ENCODE measurements at regions of chr5 and their contacts with region 1.

Region 1: DNA sequence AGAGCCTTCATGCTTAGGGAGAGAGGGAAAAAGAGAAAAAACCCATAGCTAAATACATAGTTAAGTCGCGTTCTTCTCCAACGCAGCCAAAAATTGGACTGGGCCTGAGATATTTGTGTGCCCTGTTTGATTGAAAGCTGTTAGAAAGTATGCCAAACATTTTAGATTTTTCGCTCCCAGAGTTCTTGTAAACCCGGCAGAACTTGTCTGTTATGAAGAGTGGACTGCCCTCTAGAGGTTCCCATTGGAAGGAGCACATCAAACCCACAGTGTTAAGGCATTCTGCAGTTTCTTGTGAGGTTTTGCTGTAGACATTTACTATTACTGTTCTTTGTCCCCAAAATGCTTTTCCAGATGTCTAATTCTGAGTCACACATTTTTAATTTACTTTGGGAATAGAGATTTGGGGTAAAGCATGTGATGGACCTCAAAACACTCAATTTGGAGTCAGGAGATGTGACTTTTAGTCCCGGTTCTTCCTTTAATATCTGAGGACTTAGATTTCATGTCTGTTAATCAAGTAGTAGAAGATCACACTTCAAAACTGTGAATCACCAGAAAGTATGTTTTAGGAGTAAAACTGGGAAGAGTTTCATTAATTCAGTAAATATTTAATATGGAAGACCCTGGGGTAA is 96.6 kb downstream of the PCSK1 start:
- DNase-seq: peak; percentile 79
- ATAC-seq: peak; percentile 93
- H3K4me3 Mint-ChIP-seq: no peak overlapping the region
- H3K27ac Mint-ChIP-seq: no peak overlapping the region
- H3K4me1 Mint-ChIP-seq: no peaks in the 10 kb centered on the region
- H3K27me3 Mint-ChIP-seq: peaks cover 25% of the 10 kb centered on the region
- CTCF ChIP-seq: peak; percentile 80

Region 2: DNA sequence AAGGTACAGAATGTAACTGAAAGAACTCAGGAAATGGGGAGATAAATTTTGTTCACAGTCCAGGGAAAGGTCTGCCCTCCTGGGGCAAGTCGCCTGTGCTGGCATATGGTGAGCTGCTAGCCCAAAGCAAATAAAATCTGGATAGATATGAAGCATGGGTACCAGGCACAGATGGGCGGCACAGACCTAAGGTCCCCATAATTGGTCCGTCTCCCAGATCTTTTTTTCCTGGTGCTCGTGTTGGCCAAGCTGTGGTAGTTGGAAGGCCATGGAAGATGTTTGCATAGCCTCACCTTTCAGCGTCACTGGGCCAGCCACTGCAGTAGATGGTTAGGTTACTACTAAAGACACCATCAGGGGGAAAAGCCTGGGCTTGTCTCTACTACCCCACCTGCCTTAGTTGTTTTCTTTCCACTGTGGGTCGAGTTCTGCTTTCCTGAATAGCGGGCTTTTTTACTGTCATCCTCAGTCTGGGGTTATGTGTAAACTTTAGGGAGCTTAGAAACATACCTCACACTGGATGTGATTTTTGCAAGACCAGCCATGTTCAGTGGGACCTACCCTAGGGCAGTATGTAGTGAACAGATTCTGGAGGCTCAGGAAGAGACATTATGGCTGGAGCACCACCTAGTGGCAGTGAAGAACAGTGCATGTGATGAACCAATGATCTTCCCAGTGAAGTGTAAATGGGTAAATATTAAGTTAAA is 489.8 kb before region 1 on chr5:
- CTCF ChIA-PET with region 1: interaction called, 20 read pairs
- POLR2A ChIA-PET with region 1: no interaction called
- intact Hi-C with region 1: no loop called
- DNase-seq: peak; percentile 77
- ATAC-seq: peak; percentile 78
- H3K4me3 Mint-ChIP-seq: no peak overlapping the region
- H3K27ac Mint-ChIP-seq: no peak overlapping the region
- H3K4me1 Mint-ChIP-seq: peaks cover 17% of the 10 kb centered on the region
- H3K27me3 Mint-ChIP-seq: no peaks in the 10 kb centered on the region
- CTCF ChIP-seq: peak; percentile 93

Region 3: DNA sequence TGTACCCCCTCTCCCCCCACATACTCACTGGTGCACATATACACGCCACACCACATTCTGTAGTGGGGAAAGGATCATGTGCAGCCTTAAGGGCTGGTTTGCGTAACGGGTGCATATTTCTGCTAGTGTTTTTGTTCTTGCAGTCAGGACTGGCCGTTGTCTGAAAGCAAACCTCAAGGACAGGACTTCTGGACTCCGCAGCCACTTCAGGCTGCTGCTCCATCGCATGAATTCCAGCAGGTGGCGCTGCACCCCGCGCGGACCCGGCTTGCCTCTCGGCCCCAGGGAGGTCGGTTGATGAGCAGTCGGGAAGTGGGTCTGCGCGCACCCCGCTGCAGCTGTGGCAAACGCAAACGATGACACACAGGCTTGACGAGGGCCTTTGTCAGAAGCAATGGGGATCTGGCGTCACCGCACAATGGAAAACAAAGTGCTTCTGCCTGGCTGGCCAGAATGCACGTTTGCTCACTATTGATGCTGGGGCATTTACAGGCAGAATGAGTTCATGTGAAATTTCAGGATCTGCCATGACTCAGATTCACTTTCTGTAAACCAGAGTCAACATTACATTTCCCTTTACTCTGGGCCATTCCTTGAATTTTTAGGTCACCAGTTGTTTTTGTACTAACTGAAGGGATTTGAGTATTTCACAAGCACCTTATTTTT is 477.7 kb before region 1 on chr5:
- CTCF ChIA-PET with region 1: interaction called, 53 read pairs
- POLR2A ChIA-PET with region 1: no interaction called
- intact Hi-C with region 1: loop called (anchors 1 kb)
- DNase-seq: peak; percentile 97
- ATAC-seq: peak; percentile 97
- H3K4me3 Mint-ChIP-seq: peak overlapping the region; percentile 31
- H3K27ac Mint-ChIP-seq: peak overlapping the region; percentile 66
- H3K4me1 Mint-ChIP-seq: peaks cover 45% of the 10 kb centered on the region
- H3K27me3 Mint-ChIP-seq: no peaks in the 10 kb centered on the region
- CTCF ChIP-seq: peak; percentile 92

Region 4: GRCh38 chr5:95892780-95893354 is 443.6 kb before region 1 on chr5:
- CTCF ChIA-PET with region 1: interaction called, 15 read pairs
- POLR2A ChIA-PET with region 1: no interaction called
- intact Hi-C with region 1: no loop called
- DNase-seq: peak; percentile 53
- ATAC-seq: no peak
- H3K4me3 Mint-ChIP-seq: no peak overlapping the region
- H3K27ac Mint-ChIP-seq: no peak overlapping the region
- H3K4me1 Mint-ChIP-seq: peaks cover 3% of the 10 kb centered on the region
- H3K27me3 Mint-ChIP-seq: no peaks in the 10 kb centered on the region
- CTCF ChIP-seq: peak; percentile 38

Region 5: DNA sequence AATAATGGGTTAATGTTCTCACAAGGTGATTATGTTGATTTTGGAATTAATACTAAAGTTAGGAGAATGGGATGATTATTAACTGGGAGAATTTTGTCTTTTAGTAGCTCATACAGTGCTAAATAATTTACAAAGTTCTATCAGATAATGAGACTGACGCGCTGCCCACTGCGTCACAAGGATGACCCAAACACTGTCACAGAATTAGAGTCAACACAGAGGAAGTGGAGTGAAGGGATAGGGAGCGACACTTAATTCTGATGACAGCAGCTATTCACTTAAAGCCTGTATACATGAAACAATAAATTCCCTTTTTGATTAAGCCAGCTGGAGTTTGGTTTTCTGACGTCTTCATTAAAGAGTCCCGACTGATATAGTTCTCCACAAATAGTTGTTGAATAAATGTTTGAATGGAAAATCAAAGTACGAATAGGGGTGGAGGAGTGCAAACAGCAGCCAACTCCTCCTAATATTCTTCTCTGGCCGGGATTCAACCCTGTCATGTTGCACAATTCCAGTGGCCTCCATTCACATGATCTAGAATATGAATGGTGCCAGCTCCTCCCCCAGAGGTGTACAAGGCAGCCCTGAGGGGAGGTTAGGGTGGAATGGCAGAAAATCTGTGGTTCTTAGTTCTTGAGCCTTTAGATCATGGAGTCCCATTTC is 43.8 kb before region 1 on chr5:
- CTCF ChIA-PET with region 1: interaction called, 12 read pairs
- POLR2A ChIA-PET with region 1: no interaction called
- intact Hi-C with region 1: no loop called
- DNase-seq: no peak
- ATAC-seq: no peak
- H3K4me3 Mint-ChIP-seq: no peak overlapping the region
- H3K27ac Mint-ChIP-seq: no peak overlapping the region
- H3K4me1 Mint-ChIP-seq: peaks cover 4% of the 10 kb centered on the region
- H3K27me3 Mint-ChIP-seq: peaks cover 9% of the 10 kb centered on the region
- CTCF ChIP-seq: no peak

Region 6: DNA sequence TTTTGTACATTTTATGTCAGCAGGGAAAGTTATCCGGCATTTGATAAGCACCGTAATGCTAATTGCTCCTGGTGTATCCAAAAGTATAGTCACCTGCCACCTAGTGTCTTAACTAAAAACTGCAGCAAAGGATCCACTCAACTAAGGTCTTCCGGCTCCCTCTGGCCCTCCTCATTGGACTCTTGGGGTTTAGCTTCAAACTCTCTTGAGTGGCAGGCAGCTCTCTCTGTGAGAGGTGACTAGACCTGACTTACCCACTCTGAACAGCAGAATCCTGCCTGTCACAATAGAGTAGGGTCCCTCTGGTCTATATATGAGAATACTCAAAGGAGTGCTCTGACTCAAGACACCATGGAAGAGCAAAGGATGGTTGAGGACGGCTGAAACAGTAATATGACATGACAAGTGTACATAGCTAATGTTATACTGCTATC is 265.4 kb after region 1 on chr5:
- CTCF ChIA-PET with region 1: interaction called, 108 read pairs
- POLR2A ChIA-PET with region 1: no interaction called
- intact Hi-C with region 1: no loop called
- DNase-seq: peak; percentile 69
- ATAC-seq: peak; percentile 77
- H3K4me3 Mint-ChIP-seq: no peak overlapping the region
- H3K27ac Mint-ChIP-seq: no peak overlapping the region
- H3K4me1 Mint-ChIP-seq: peaks cover 13% of the 10 kb centered on the region
- H3K27me3 Mint-ChIP-seq: peaks cover 7% of the 10 kb centered on the region
- CTCF ChIP-seq: peak; percentile 81

Region 7: DNA sequence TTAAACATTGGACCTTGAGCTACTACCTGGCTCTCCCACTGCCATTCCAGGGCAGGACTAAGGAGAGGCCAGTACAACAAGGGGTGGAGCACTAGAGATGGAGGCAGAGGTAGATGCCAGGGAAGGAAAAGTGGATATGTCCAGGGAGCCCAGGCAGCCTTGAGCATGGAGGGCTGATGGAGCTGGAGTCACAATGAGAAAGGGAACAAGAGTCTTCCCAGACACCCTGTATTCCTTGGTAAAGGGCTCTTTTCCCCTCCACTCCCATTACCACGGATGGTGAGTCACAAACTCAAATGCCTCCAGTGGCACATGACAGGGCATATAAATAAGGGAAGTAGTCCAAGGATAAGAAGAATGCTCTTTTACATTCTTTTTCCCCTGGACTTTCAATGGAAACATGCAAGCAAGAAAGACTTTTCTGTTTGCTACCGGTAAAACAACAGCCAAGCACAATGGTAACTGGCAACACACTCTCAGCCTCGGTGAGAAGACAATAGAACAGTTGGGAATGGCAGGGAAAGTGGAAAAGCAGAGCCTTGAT is 454.6 kb after region 1 on chr5:
- CTCF ChIA-PET with region 1: no interaction called
- POLR2A ChIA-PET with region 1: no interaction called
- intact Hi-C with region 1: no loop called
- DNase-seq: no peak
- ATAC-seq: no peak
- H3K4me3 Mint-ChIP-seq: no peak overlapping the region
- H3K27ac Mint-ChIP-seq: peak overlapping the region; percentile 62
- H3K4me1 Mint-ChIP-seq: peaks cover 26% of the 10 kb centered on the region
- H3K27me3 Mint-ChIP-seq: no peaks in the 10 kb centered on the region
- CTCF ChIP-seq: no peak

Measured in activated CD8-positive, alpha-beta T cell treated with anti-CD3 and anti-CD28 coated beads for 36 hours (primary cell).